ENCODE measurements at regions of chr6 and their contacts with region 1.

Region 1: DNA sequence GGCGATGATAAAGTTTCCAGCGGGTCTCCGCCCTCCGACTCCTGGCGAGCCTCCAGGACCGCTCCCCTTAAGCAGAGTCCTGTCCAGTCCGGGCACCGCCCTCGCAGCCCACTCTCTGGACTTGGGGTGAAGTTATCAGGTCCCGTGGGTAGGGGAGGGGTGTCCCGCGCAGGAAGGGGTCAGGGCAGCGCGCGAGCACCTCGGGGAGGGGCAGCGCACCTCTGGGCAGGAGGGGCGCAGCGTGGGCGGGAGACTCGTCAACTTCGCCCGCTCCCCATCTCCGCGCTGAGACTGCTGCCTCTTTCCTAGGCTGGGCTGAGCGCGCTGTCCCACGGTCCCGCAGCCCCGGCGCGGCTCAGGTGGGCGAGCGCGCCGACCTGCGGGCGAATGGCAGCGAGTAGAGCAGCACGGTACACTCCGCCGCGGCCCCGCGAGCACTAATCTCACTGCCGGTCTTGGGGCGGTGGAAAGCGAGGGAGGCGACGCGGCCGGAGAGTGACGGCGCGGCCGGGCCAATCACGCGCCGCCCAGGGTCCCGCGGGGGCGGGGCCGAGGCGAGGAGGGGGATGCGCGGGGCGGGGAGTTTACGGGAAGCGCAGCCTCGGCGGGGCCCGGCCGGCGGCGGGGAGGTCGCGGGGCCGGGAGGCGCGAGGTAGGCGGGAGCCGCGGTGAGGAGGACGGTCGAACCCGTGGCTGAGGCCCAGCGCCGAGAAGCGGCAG is at the start of gene MAN1A1:
- DNase-seq: peak; percentile 90 to 96 (median 93)
- ATAC-seq: peak; percentile 94 to 98 (median 96)
- H3K4me3 ChIP-seq: peak within 1 kb of the TSS; percentile 77 to 99 (median 94)
- H3K27ac ChIP-seq: peak within 1 kb of the TSS; percentile 89 to 99 (median 96)
- H3K4me1 ChIP-seq: peaks cover 0 to 72% (median 17%) of the 10 kb centered on the region in 12 donors
- H3K27me3 ChIP-seq: no peaks in the 10 kb centered on the region
- CTCF ChIP-seq: peak in 3 of 12 donors; percentile 7 to 30 (median 22)
- POLR2A ChIP-seq: peak; percentile 72 to 98
- total RNA-seq, gene MAN1A1: 7.0 to 30.6 (median 20.6) TPM

Region 2: DNA sequence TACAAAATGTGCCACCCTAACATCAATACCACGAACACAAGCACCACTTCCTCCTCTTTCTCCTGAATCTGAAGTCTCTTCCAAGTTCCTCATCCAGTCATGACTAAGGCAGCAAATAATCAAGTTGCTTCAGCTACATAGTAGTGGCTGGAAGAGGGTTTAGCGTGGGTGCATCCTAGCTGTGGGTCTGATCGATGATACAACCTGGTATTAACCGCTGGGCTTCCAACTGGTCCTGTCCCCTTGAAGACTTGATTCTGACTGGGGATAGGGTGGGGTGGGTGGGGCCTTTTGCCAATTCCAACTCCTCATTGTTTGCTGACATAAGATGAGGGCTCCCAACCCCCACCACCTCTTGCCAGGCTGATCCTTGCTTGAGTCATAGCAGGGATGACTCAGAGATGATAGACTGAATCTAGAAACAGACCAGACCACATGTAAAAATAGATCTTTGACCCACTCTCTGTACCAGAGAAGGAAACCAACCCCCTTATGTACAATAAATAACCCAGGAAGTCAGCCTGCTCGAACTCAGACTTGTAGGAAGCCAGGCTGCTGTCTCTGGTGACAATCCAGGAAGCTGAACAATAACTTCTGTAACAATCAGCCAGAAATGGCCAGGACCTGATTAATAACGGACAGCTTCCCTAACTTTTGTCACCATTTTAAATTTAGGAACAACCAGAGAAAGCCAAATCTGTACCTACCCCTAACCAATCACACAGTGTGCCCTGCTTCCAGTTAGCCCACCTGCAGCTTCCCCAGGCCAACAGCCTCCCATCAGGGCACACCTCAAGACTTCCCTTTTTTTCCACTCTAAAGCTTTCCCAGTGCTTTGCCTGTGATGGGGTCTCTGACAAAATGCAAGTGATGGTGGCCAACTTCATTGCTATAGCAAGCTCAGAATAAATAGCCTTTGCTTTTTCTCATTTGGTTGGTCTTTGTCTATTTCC is 202.1 kb before region 1 on chr6:
- intact Hi-C with region 1: loop called in 7 of 10 experiments (anchors 5 to 10 kb)
- DNase-seq: peak in 3 of 5 donors; percentile 40 to 71 (median 70)
- ATAC-seq: peak; percentile 47 to 98 (median 84)
- H3K4me3 ChIP-seq: no peak overlapping the region
- H3K27ac ChIP-seq: peak overlapping the region in 6 of 12 donors; percentile 5 to 83 (median 24)
- H3K4me1 ChIP-seq: peaks cover 0 to 23% (median 11%) of the 10 kb centered on the region in 12 donors
- H3K27me3 ChIP-seq: no peaks in the 10 kb centered on the region
- CTCF ChIP-seq: no peak
- POLR2A ChIP-seq: no peak

Region 3: GRCh38 chr6:119241111-119241465 is 108.4 kb before region 1 on chr6:
- intact Hi-C with region 1: loop called in 1 of 10 experiments (anchors 10 kb)
- DNase-seq: peak in 1 of 5 donors; percentile 24
- ATAC-seq: peak; percentile 42 to 80 (median 54)
- H3K4me3 ChIP-seq: no peak overlapping the region
- H3K27ac ChIP-seq: peak overlapping the region in 4 of 12 donors; percentile 1 to 45 (median 35)
- H3K4me1 ChIP-seq: peaks cover 0 to 15% (median 8%) of the 10 kb centered on the region in 12 donors
- H3K27me3 ChIP-seq: no peaks in the 10 kb centered on the region
- CTCF ChIP-seq: no peak
- POLR2A ChIP-seq: no peak

Region 4: GRCh38 chr6:119368951-119369350 is 19.5 kb after region 1 on chr6:
- intact Hi-C with region 1: no loop called
- DNase-seq: no peak
- ATAC-seq: no peak
- H3K4me3 ChIP-seq: no peak overlapping the region
- H3K27ac ChIP-seq: no peak overlapping the region
- H3K4me1 ChIP-seq: no peaks in the 10 kb centered on the region
- H3K27me3 ChIP-seq: no peaks in the 10 kb centered on the region
- CTCF ChIP-seq: no peak
- POLR2A ChIP-seq: no peak

Region 5: DNA sequence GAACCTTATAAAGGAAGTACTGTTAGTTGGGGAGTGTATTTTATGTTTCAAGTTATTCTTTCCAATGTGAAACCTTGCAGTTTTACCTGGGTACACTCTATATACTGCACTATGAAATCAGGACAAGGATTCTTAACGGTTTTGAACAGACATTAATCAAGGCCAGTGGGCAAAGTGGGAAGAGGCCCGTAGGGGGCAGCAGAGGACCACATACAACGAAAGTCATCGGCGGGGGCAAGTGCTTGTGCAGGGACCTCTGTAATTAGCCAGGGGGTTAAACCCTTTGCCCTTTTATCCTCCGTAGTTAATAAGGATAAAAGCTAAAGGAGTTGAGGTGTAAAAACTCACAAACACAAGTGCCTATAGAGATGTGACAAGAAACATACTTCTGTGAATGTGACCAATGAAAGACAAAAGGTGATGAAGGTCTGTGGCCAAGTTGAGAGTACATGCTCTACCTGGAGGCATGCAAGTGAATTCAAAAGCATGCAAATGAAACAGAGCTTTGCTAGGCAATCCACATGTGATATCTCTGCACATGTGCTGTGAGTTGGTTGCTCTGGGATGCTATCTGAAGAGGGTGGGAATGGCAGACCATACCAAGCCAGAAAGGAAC is 392.8 kb after region 1 on chr6:
- intact Hi-C with region 1: loop called in 1 of 10 experiments (anchors 10 kb)
- DNase-seq: peak; percentile 30 to 70 (median 40)
- ATAC-seq: peak in 3 of 4 donors; percentile 50 to 63 (median 61)
- H3K4me3 ChIP-seq: no peak overlapping the region
- H3K27ac ChIP-seq: no peak overlapping the region
- H3K4me1 ChIP-seq: no peaks in the 10 kb centered on the region
- H3K27me3 ChIP-seq: no peaks in the 10 kb centered on the region
- CTCF ChIP-seq: peak; percentile 55 to 85 (median 78)
- POLR2A ChIP-seq: no peak